H1 (cell line): ENCODE measurements at regions of chr1 and their contacts with region 1.

Region 1: DNA sequence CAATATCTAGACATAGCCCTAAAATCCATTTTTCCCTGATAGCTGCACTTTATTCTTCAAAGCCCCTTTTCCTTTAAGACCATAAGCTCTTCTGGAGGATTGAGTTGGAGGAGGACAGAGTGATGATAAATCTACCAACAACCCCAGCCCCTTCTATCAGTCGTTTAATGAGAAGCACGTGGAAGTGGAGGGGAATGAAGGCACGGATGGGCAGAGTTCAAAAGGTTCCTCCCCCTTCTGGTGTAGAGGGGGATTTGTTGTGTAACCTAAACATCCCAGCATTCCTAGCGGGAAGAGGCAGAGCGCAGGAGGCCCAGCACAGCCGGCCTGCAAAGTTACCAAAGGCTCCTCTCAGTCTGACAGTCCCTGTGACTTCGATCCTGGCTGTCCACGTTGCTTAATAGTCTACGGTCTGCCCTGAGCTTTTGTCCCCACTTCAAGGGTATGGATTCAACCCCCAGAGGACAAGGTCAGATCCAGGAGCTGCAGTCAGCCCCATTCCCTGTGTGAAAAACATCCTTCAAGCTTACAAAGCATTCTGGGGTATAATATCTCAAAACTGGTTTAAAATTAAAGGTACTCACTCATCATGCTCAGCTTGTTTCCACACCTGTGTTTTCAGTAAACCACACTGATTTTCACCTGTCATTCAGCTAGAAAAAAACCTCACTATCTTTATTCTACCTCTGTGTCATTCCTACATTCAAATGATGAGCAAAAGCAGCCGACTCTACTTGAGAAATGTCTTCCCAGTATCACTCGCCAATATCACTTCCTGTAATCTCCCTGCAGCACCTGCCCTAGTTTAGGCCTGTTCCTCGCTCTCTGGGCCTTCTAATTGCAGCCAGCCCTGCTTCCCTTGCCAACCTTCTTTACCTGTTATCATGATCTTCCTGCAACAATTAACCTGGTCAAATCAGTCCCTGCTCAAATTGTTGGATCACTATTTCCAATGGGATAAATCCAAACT is 117.9 kb downstream of the PLPP3 start:
- DNase-seq: no peak
- H3K4me3 ChIP-seq: no peak overlapping the region
- H3K27ac ChIP-seq: no peak overlapping the region
- H3K4me1 ChIP-seq: no peaks in the 10 kb centered on the region; a peak in 1 of 7 replicates
- H3K27me3 ChIP-seq: no peaks in the 10 kb centered on the region
- CTCF ChIP-seq: peak in 2 of 3 experiments; percentile 9 to 18; a peak in 2 of 4 replicates
- EP300 ChIP-seq: no peak
- POLR2A ChIP-seq: no peak
- RAD21 ChIP-seq: peak; percentile 18 to 54; a peak in 3 of 4 replicates

Region 2: DNA sequence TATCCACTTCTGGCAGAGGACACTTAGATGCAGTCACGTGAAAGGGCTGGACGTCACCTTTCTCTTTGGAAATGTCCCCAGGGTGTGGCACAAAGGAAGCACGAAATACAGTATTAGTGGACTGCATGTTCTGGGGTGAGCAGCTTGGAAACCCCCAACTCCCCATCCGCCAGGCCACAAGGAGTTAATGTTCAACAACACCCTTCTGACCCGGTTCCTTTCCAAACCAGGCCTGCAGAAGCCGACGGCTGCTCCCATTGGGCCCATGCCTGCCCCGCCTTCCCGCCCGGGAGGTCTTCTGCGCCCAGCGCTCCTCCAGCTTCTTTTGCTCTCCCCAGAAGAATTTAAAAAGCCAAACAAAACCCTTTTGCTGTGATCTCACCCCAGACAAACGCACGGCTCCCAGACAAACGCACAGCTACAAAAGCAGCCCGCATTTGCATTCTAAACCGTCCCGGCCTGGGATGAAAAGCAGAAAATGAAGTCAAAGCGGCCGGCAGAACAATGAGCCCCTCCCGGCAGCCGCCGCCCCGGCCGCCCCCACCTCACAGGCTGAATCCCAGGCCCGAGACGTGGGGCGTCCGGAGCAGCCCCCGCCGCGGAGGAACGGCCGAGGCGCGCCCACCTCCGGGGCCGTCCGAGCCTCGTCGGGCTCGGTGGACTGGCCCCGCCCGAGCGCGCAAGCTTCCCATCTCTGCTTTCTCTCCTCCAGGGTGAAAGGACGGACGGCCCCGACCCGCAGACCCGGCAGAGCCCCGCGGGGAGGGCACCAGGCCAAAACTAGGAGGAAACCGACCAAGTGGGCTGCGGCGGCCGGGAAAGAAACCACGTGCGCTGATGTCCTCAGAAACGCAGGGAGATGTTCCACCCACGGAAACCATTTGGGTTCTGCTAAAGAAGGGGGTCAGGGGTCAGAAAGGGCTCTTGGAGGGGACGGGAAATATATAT is 16.0 kb after region 1 on chr1:
- CTCF ChIA-PET with region 1: interaction called, 19 read pairs
- POLR2A ChIA-PET with region 1: interaction called, 3 read pairs
- DNase-seq: peak; percentile 54 to 67
- H3K4me3 ChIP-seq: peak overlapping the region; percentile 30 to 66 (median 48)
- H3K27ac ChIP-seq: no peak overlapping the region
- H3K4me1 ChIP-seq: peaks cover 2 to 6% (median 3%) of the 10 kb centered on the region in 4 experiments
- H3K27me3 ChIP-seq: peaks cover 0 to 4% (median 0%) of the 10 kb centered on the region in 4 experiments; a peak in 2 of 7 replicates
- CTCF ChIP-seq: no peak
- EP300 ChIP-seq: no peak; a peak in 1 of 3 replicates
- POLR2A ChIP-seq: no peak
- RAD21 ChIP-seq: no peak; a peak in 1 of 4 replicates